Lower leg skin (tissue), 4 donors: ENCODE measurements at regions of chr17 and their contacts with region 1.

Region 1: GRCh38 chr17:46002311-46002972 is 3.4 kb downstream of the STH start:
- DNase-seq: peak; percentile 70 to 94
- H3K4me3 ChIP-seq: no peak overlapping the region
- CTCF ChIP-seq: peak in 1 of 3 donors; percentile 91
- POLR2A ChIP-seq: no peak

Region 2: GRCh38 chr17:46212634-46213435 is 210.4 kb after region 1 on chr17:
- intact Hi-C with region 1: loop called (anchors 5 kb)
- DNase-seq: peak in 1 of 2 donors; percentile 76
- H3K4me3 ChIP-seq: no peak overlapping the region
- CTCF ChIP-seq: peak in 1 of 3 donors; percentile 79
- POLR2A ChIP-seq: no peak